Mammary epithelial cell (primary cell): ENCODE measurements at regions of chr22 and their contacts with region 1.

Region 1: GRCh38 chr22:17436382-17436980 is 67.2 kb downstream of the CECR2 start:
- DNase-seq: no peak
- H3K4me3 ChIP-seq: no peak overlapping the region
- H3K27ac ChIP-seq: no peak overlapping the region
- H3K4me1 ChIP-seq: no peaks in the 10 kb centered on the region
- H3K27me3 ChIP-seq: no peaks in the 10 kb centered on the region
- CTCF ChIP-seq: no peak

Region 2: DNA sequence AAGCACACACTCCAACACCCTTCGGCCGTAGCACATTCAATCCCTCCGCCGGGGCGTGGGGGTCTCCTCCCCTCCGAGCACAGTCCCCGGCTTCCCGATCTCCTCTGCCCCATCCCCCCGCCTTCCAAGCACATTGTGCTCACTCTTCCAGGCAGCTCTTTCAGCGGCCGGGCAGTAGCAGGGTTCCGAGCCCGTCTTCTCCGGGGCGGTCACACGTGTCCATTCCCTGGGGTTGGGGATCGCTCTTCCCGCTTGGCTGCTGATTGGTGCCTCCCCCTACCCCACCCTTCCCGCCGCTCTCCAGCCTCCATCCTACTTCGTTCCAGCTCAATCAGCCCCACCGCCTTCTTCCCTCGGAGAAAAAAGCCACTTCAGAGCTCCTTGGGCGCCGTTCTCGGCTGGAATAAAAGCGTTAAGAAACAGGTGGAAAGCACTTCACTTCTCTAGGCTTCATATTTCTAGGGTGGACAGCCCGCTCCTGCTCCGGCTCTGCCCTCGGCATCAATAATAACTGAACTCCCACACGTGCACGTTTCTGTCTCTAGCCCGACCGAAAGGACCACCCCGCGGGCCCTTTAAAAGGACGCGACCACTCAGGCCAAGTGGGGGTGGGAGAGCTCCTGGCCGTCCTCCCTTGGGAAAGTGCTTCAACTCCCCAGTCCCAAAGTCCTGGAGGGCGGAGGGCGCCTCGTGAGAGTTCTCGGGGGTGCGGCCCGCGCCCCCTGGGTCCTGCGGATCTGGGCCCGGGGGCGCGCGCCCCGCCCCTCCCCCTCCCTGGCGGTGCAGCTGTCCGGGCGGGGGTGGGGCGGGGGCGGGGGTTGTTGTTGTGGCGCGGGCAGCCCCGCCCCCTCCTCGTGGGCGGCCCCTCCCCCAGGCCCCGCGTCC is 67.7 kb before region 1 on chr22:
- CTCF ChIA-PET with region 1: no interaction called
- dilution Hi-C with region 1: loop called (anchors 5 kb)
- in situ Hi-C with region 1: no loop called
- intact Hi-C with region 1: no loop called
- DNase-seq: no peak
- H3K4me3 ChIP-seq: no peak overlapping the region
- H3K27ac ChIP-seq: no peak overlapping the region
- H3K4me1 ChIP-seq: no peaks in the 10 kb centered on the region
- H3K27me3 ChIP-seq: peaks cover 24% of the 10 kb centered on the region
- CTCF ChIP-seq: no peak